Endothelial cell of umbilical vein (primary cell): ENCODE measurements at regions of chr20 and their contacts with region 1.

Region 1: GRCh38 chr20:3825526-3825925 is 5.2 kb downstream of the AP5S1 start:
- DNase-seq: no peak
- H3K4me3 ChIP-seq: no peak overlapping the region
- H3K27ac ChIP-seq: no peak overlapping the region
- H3K4me1 ChIP-seq: peaks cover 2% of the 10 kb centered on the region
- H3K27me3 ChIP-seq: no peaks in the 10 kb centered on the region
- CTCF ChIP-seq: no peak
- POLR2A ChIP-seq: no peak

Region 2: GRCh38 chr20:3470627-3471396 is 354.7 kb before region 1 on chr20 and contains the start of gene ATRN:
- CTCF ChIA-PET with region 1: no interaction called
- POLR2A ChIA-PET with region 1: no interaction called
- dilution Hi-C with region 1: no loop called
- intact Hi-C with region 1: no loop called
- DNase-seq: peak; percentile 93
- H3K4me3 ChIP-seq: peak within 1 kb of the TSS; percentile 79 to 87 (median 85)
- H3K27ac ChIP-seq: peak within 1 kb of the TSS; percentile 79
- H3K4me1 ChIP-seq: peaks cover 11% of the 10 kb centered on the region
- H3K27me3 ChIP-seq: peaks cover 10 to 16% of the 10 kb centered on the region in 2 experiments
- CTCF ChIP-seq: no peak
- POLR2A ChIP-seq: peak; percentile 98
- total RNA-seq, gene ATRN: 33.1 and 35.1 TPM in 2 replicates

Region 3: DNA sequence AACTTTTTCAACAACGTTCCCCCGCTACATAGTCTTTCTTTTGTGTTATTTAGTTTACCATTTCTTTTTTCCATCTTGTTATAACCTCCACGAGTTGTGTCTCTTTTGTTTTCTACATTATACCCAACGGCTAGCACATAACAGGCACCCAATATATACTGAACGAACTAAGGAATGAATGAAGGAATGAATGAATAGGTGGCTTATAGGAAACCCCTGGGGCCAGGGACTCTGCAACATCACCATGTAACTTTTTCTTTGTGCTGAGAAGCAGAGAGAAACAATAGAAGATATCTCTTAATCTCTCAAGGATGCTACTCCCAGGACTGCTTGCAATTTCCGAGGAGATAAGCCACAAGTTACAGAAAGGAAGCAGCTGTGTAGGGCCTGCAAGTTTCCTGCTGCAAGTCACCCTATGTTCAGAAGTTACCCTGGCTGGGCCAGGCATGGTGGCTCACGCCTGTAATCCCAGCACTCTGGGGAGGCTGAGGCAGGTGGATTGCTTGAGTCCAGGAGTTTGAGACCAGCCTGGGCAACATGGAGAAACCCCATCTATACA is 13.7 kb after region 1 on chr20:
- CTCF ChIA-PET with region 1: interaction called, 6 read pairs
- POLR2A ChIA-PET with region 1: interaction called, 4 read pairs
- dilution Hi-C with region 1: no loop called
- intact Hi-C with region 1: loop called (anchors 2 kb)
- DNase-seq: peak; percentile 46
- H3K4me3 ChIP-seq: no peak overlapping the region
- H3K27ac ChIP-seq: no peak overlapping the region
- H3K4me1 ChIP-seq: peaks cover 2% of the 10 kb centered on the region
- H3K27me3 ChIP-seq: no peaks in the 10 kb centered on the region
- CTCF ChIP-seq: no peak
- POLR2A ChIP-seq: no peak

Region 4: GRCh38 chr20:3864518-3864917 is 39.0 kb after region 1 on chr20:
- CTCF ChIA-PET with region 1: no interaction called
- POLR2A ChIA-PET with region 1: no interaction called
- dilution Hi-C with region 1: no loop called
- intact Hi-C with region 1: no loop called
- DNase-seq: no peak
- H3K4me3 ChIP-seq: no peak overlapping the region
- H3K27ac ChIP-seq: no peak overlapping the region
- H3K4me1 ChIP-seq: no peaks in the 10 kb centered on the region
- H3K27me3 ChIP-seq: no peaks in the 10 kb centered on the region
- CTCF ChIP-seq: no peak
- POLR2A ChIP-seq: no peak

Region 5: DNA sequence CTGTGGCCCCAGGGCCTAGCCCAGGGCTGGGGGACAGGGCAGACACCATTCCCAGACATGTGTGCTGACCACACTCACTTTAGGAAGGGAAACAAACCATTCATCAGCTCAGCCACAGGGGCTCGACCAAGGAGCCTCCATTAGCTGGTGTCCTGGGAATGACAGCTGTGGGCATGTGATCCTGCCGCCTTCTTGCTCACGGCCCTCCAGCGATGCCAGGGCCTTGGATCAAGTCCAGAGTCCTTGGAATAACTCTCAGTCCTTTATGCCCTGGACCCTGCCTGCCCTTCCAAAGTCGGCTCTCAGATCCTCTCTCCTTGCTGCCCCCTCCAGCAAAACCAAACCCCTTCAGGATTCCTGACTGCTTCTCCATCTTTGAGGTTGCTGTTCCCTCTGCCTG is 354.8 kb after region 1 on chr20:
- CTCF ChIA-PET with region 1: no interaction called
- POLR2A ChIA-PET with region 1: no interaction called
- dilution Hi-C with region 1: no loop called
- intact Hi-C with region 1: no loop called
- DNase-seq: no peak
- H3K4me3 ChIP-seq: no peak overlapping the region
- H3K27ac ChIP-seq: no peak overlapping the region
- H3K4me1 ChIP-seq: no peaks in the 10 kb centered on the region
- H3K27me3 ChIP-seq: no peaks in the 10 kb centered on the region
- CTCF ChIP-seq: no peak
- POLR2A ChIP-seq: no peak